A549 (cell line): ENCODE measurements at regions of chr3 and their contacts with region 1.

Region 1: GRCh38 chr3:16264708-16265454 is at the starts of genes DPH3 and OXNAD1:
- DNase-seq: peak; percentile 97 to 99
- ATAC-seq: peak; percentile 99
- H3K4me3 ChIP-seq: peak within 1 kb of the TSS; percentile 95
- H3K27ac ChIP-seq: peak within 1 kb of the TSS; percentile 85 to 88
- H3K4me1 ChIP-seq: peaks cover 19% of the 10 kb centered on the region
- CTCF ChIP-seq: no peak
- EP300 ChIP-seq: no peak
- POLR2A ChIP-seq: peak; percentile 75
- RAD21 ChIP-seq: no peak
- polyA plus RNA-seq, gene DPH3: 34.7 and 37.5 TPM in 2 replicates
- polyA plus RNA-seq, gene OXNAD1: 24.2 and 25.9 TPM in 2 replicates

Region 2: GRCh38 chr3:15610082-15610759 is 654.7 kb before region 1 on chr3:
- CTCF ChIA-PET with region 1: no interaction called
- POLR2A ChIA-PET with region 1: no interaction called
- DNase-seq: peak; percentile 64 to 70
- ATAC-seq: peak; percentile 86 to 91
- H3K4me3 ChIP-seq: no peak overlapping the region
- H3K27ac ChIP-seq: peak overlapping the region; percentile 6 to 44; a peak in 1 of 6 replicates
- H3K4me1 ChIP-seq: peaks cover 45% of the 10 kb centered on the region
- CTCF ChIP-seq: no peak
- EP300 ChIP-seq: no peak
- POLR2A ChIP-seq: no peak
- RAD21 ChIP-seq: no peak

Region 3: GRCh38 chr3:16247276-16248061 is 17.4 kb before region 1 on chr3:
- CTCF ChIA-PET with region 1: interaction called, 10 read pairs
- POLR2A ChIA-PET with region 1: no interaction called
- DNase-seq: peak; percentile 68 to 81
- ATAC-seq: peak; percentile 85 to 94
- H3K4me3 ChIP-seq: no peak overlapping the region
- H3K27ac ChIP-seq: peak overlapping the region; percentile 46 to 58; a peak in 4 of 6 replicates
- H3K4me1 ChIP-seq: peaks cover 6% of the 10 kb centered on the region
- CTCF ChIP-seq: peak; percentile 93
- EP300 ChIP-seq: no peak
- POLR2A ChIP-seq: no peak
- RAD21 ChIP-seq: peak; percentile 96 to 97

Region 4: DNA sequence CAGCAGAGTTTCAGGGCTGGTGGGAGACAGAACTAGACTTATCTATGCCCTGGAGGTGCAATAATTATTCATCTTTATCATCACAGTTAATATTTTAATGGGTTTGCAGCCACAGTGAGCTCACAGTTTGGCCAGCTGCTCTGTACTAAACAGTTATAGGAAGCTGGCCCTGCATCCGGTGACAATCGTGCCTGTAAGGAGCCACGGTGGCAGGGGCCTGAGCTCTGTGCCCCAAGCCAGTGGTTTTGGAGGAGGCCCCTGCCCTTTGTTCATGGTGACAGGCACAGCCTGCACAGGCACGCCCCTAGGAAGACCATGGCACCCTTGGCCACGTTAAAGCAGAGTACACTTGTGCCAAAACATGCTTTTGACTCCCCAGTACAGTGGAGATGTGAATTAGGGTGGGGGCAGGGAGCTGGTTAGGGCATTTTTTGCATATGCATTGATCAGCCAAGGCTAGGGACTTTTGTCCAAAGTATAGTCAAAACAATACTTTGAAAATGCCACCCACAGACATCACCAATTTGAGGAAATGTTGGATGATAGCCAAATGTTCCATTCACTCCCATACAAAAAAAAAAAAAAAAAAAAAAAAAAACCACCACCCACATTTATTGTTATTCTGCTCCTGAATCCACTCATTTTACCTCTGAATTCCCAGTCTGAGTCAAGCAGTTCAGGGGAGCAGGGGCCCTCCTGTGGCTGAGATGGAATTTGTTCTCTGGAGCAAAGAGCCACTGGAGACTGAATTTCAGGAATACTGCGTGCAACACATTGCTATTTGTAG is 252.0 kb after region 1 on chr3:
- CTCF ChIA-PET with region 1: interaction called, 18 read pairs
- POLR2A ChIA-PET with region 1: no interaction called
- DNase-seq: peak; percentile 38
- ATAC-seq: peak; percentile 55 to 70; a peak in 4 of 6 replicates
- H3K4me3 ChIP-seq: no peak overlapping the region
- H3K27ac ChIP-seq: no peak overlapping the region
- H3K4me1 ChIP-seq: no peaks in the 10 kb centered on the region
- CTCF ChIP-seq: peak; percentile 49
- EP300 ChIP-seq: no peak
- POLR2A ChIP-seq: no peak
- RAD21 ChIP-seq: peak; percentile 60 to 65